Brain microvascular endothelial cell (primary cell): ENCODE measurements at regions of chr10 and their contacts with region 1.

Region 1: DNA sequence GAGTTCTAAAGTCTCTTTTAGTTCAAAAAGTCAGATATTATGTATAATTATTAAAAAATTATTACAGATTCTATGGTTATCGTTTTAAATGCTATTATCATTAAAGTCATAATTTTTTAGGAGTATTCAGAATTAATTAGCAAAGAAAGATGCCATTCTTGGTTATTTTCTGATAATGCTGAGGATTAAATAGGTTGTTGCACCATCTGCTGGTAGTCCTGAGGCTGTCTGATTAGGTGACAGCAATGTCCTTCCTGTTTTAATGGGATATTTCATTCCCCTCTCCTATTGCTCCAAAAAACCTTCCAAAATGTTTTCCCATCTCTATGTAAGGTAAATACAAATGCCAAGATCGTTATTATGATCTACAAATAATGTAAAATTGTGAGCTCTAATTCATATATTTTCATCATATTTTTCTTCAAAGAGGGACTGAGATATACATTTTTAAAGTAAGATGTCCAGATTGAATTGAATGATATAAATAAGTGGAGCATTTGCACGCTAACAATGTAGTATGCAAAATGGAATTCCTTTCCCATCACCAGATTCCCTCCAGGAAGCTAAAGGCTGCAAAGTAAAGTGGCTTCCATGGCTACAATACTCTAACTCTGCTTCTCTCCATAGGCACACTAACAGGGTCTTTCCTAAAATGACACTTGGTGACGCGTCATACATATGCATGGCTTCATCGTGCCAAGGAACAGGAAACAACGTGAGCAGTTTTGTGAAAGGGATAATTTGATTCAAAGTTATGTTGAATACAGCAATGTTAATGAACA is 58.8 kb upstream of the AKR1E2 start:
- DNase-seq: peak; percentile 45
- H3K4me3 ChIP-seq: no peak overlapping the region
- H3K27ac ChIP-seq: peak overlapping the region; percentile 64
- H3K27me3 ChIP-seq: no peaks in the 10 kb centered on the region
- CTCF ChIP-seq: peak; percentile 69

Region 2: GRCh38 chr10:4241724-4242345 is 525.4 kb before region 1 on chr10:
- in situ Hi-C with region 1: loop called (anchors 10 kb)
- DNase-seq: peak; percentile 100
- H3K4me3 ChIP-seq: peak overlapping the region; percentile 35
- H3K27ac ChIP-seq: peak overlapping the region; percentile 100
- H3K27me3 ChIP-seq: no peaks in the 10 kb centered on the region
- CTCF ChIP-seq: no peak

Region 3: GRCh38 chr10:4656576-4657182 is 110.5 kb before region 1 on chr10:
- in situ Hi-C with region 1: loop called (anchors 10 kb)
- DNase-seq: peak; percentile 54
- H3K4me3 ChIP-seq: no peak overlapping the region
- H3K27ac ChIP-seq: no peak overlapping the region
- H3K27me3 ChIP-seq: no peaks in the 10 kb centered on the region
- CTCF ChIP-seq: peak; percentile 89

Region 4: DNA sequence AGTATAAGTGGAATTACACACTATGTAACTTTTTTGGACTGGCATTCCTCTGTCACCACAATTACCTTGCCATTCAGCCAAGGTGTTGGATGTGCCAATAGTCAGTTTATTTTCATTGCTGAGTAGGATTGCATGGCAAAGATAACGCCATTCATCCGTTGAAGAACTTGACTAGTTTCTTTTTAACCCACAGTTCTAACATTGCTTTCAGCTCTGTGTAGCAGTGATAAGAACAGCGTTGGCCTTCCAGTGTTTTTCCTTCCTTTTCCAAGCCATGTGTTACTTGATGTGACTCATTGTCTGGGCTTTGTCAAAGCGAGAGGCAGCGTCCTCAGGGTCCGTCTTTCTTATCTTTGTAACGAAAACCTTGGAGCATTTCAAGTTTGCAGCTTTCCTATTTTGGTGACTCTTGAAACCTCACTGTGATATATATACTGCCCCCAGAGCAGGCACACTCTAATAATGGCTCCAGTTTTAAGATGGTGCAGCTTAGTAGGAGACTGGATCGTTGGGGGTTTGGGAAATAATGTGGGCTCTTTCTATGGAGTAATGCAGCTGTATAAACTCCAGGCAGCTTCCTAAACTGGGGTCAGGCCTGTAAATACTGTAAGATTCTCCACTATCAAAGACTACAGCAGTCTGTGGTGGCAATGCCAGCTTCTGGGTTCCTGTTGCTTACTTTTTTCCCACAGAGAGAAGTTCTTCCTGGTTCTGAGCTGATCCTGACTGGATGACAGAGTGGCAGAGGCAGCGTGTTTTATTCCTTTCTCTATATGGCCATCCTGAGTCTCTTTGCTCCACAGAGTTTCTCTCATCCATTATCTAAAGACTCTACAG is 100.5 kb after region 1 on chr10:
- in situ Hi-C with region 1: no loop called
- DNase-seq: peak; percentile 57
- H3K4me3 ChIP-seq: no peak overlapping the region
- H3K27ac ChIP-seq: no peak overlapping the region
- H3K27me3 ChIP-seq: no peaks in the 10 kb centered on the region
- CTCF ChIP-seq: no peak